Astrocyte of the cerebellum (primary cell): ENCODE measurements at regions of chr16 and their contacts with region 1.

Region 1: GRCh38 chr16:68921654-68922053 is 78.3 kb downstream of the TANGO6 start:
- DNase-seq: peak; percentile 24
- H3K4me3 ChIP-seq: no peak overlapping the region
- CTCF ChIP-seq: no peak

Region 2: GRCh38 chr16:68689925-68690324 is 231.7 kb before region 1 on chr16:
- in situ Hi-C with region 1: no loop called
- DNase-seq: no peak
- H3K4me3 ChIP-seq: no peak overlapping the region
- CTCF ChIP-seq: no peak

Region 3: GRCh38 chr16:68972720-68973119 is 51.1 kb after region 1 on chr16:
- in situ Hi-C with region 1: no loop called
- DNase-seq: peak; percentile 55
- H3K4me3 ChIP-seq: no peak overlapping the region
- CTCF ChIP-seq: peak; percentile 68

Region 4: DNA sequence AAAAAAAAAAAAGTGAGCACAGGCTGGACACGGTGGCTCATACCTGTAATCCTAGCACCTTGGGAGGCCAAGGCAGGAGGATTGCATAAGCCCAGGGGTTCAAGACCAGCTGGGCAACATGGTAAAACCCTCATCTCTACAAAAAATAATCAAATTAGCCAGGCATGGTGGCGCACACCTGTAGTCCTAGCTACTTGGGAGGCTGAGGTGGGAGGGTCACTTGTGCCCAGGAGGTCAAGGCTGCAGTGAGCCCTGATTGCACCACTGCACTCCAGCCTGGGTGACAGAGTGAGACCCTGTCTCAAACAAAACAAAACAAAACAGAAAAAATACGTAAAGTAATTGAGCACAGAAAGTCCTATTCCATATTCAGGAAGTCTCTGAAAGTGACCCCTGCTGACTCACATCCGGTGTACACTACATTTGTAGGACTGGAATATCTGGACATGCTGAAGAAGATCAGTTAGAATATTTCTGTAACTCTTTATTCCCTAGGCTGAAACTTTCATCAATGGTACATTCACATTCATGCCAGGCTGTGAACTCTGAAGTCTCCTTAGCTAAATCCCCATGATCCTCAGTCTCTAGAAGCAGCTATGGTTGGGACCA is 117.8 kb after region 1 on chr16:
- in situ Hi-C with region 1: loop called (anchors 10 kb)
- DNase-seq: no peak
- H3K4me3 ChIP-seq: no peak overlapping the region
- CTCF ChIP-seq: no peak